MCF 10A (cell line): ENCODE measurements at regions of chr14 and their contacts with region 1.

Region 1: GRCh38 chr14:68795597-68796417 is 2.9 kb upstream of the ZFP36L1 start:
- DNase-seq: peak; percentile 81
- H3K4me3 Mint-ChIP-seq: peak overlapping the region; percentile 98
- H3K27ac Mint-ChIP-seq: peak overlapping the region; percentile 97
- H3K4me1 Mint-ChIP-seq: peaks cover 15% of the 10 kb centered on the region
- H3K27me3 Mint-ChIP-seq: no peaks in the 10 kb centered on the region
- CTCF ChIP-seq: peak; percentile 72

Region 2: GRCh38 chr14:68084256-68084655 is 711.6 kb before region 1 on chr14:
- CTCF ChIA-PET with region 1: no interaction called
- POLR2A ChIA-PET with region 1: interaction called, 4 read pairs
- intact Hi-C with region 1: loop called (anchors 5 kb)
- DNase-seq: peak; percentile 8
- H3K4me3 Mint-ChIP-seq: no peak overlapping the region
- H3K27ac Mint-ChIP-seq: no peak overlapping the region
- H3K4me1 Mint-ChIP-seq: peaks cover 18% of the 10 kb centered on the region
- H3K27me3 Mint-ChIP-seq: no peaks in the 10 kb centered on the region
- CTCF ChIP-seq: peak; percentile 12

Region 3: DNA sequence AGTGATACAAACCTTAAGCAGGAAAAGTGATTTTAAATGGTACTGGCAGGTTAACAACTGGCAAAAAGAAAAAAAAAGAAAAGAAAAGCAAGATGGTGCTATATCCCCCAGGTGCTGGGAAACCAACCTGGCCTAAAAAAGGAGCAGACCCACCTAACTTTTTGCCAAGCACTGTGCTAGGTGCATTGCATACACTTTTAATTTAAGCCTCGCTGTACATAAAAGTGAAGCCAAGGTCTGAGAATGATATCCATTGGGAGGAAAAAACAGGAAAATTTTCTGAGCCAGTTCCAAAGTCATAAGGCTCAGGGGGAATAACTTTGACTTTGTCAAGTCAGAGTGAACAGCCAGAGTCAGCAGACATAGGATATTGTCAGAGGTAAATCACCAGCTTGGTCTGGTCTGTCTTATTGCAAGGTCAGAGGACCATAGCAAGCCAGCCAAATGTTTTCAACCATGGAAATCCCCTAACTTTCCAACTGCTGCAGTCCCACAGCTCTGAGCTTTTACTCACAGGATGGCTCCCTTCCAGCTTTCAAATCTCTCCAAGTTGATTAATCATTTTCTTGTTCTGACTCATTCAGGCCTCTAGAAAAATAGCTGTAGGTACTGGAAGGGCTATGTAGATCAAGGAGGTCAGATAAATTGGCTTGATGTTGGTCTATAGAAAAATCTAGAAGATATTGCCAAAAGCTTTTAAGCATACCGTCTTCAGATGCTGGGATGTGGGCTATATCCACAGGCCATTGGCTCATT is 563.3 kb before region 1 on chr14:
- CTCF ChIA-PET with region 1: interaction called, 3 read pairs
- POLR2A ChIA-PET with region 1: interaction called, 15 read pairs
- intact Hi-C with region 1: no loop called
- DNase-seq: peak; percentile 99
- H3K4me3 Mint-ChIP-seq: no peak overlapping the region
- H3K27ac Mint-ChIP-seq: no peak overlapping the region
- H3K4me1 Mint-ChIP-seq: no peaks in the 10 kb centered on the region
- H3K27me3 Mint-ChIP-seq: no peaks in the 10 kb centered on the region
- CTCF ChIP-seq: no peak

Region 4: DNA sequence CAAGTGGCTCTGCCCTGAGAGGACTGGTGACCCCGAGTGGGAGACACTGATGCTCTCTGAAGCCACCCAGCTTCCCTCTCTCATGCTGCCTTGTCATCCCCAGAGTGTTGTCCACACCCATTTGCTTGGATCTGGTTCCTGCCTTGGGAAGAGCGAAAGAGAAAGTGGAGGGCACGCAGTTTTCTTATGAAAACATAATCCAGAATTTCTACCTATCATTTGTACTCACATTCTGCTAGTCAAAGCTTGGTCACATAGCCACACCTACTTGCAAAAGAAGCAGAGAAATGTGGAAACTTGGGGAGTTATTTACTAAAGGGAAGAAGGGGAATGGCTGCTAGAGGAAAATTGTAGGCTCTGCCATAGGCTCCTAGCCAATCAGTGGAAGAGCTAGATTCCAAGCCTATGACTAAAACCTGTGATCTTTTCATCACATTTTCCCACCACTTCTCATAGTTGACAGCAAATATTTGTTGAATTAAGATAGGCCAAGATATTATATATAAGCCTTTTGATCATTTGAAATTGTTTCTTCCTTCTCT is 329.2 kb before region 1 on chr14:
- CTCF ChIA-PET with region 1: no interaction called
- POLR2A ChIA-PET with region 1: interaction called, 25 read pairs
- intact Hi-C with region 1: no loop called
- DNase-seq: peak; percentile 93
- H3K4me3 Mint-ChIP-seq: peak overlapping the region; percentile 60
- H3K27ac Mint-ChIP-seq: peak overlapping the region; percentile 75
- H3K4me1 Mint-ChIP-seq: peaks cover 65% of the 10 kb centered on the region
- H3K27me3 Mint-ChIP-seq: no peaks in the 10 kb centered on the region
- CTCF ChIP-seq: no peak

Region 5: GRCh38 chr14:68535404-68536017 is 260.3 kb before region 1 on chr14:
- CTCF ChIA-PET with region 1: interaction called, 4 read pairs
- POLR2A ChIA-PET with region 1: interaction called, 14 read pairs
- intact Hi-C with region 1: no loop called
- DNase-seq: peak; percentile 60
- H3K4me3 Mint-ChIP-seq: no peak overlapping the region
- H3K27ac Mint-ChIP-seq: peak overlapping the region; percentile 72
- H3K4me1 Mint-ChIP-seq: peaks cover 26% of the 10 kb centered on the region
- H3K27me3 Mint-ChIP-seq: no peaks in the 10 kb centered on the region
- CTCF ChIP-seq: no peak

Region 6: GRCh38 chr14:68695326-68695768 is 100.5 kb before region 1 on chr14:
- CTCF ChIA-PET with region 1: interaction called, 3 read pairs
- POLR2A ChIA-PET with region 1: interaction called, 41 read pairs
- intact Hi-C with region 1: no loop called
- DNase-seq: peak; percentile 99
- H3K4me3 Mint-ChIP-seq: peak overlapping the region; percentile 40
- H3K27ac Mint-ChIP-seq: peak overlapping the region; percentile 96
- H3K4me1 Mint-ChIP-seq: peaks cover 44% of the 10 kb centered on the region
- H3K27me3 Mint-ChIP-seq: no peaks in the 10 kb centered on the region
- CTCF ChIP-seq: no peak

Region 7: GRCh38 chr14:68816262-68816942 is 20.6 kb after region 1 on chr14:
- CTCF ChIA-PET with region 1: interaction called, 52 read pairs
- POLR2A ChIA-PET with region 1: interaction called, 90 read pairs
- intact Hi-C with region 1: loop called (anchors 1 kb)
- DNase-seq: peak; percentile 85
- H3K4me3 Mint-ChIP-seq: peak overlapping the region; percentile 49
- H3K27ac Mint-ChIP-seq: peak overlapping the region; percentile 88
- H3K4me1 Mint-ChIP-seq: peaks cover 20% of the 10 kb centered on the region
- H3K27me3 Mint-ChIP-seq: no peaks in the 10 kb centered on the region
- CTCF ChIP-seq: peak; percentile 98